K562 (cell line): ENCODE measurements at regions of chrX and their contacts with region 1.

Region 1: DNA sequence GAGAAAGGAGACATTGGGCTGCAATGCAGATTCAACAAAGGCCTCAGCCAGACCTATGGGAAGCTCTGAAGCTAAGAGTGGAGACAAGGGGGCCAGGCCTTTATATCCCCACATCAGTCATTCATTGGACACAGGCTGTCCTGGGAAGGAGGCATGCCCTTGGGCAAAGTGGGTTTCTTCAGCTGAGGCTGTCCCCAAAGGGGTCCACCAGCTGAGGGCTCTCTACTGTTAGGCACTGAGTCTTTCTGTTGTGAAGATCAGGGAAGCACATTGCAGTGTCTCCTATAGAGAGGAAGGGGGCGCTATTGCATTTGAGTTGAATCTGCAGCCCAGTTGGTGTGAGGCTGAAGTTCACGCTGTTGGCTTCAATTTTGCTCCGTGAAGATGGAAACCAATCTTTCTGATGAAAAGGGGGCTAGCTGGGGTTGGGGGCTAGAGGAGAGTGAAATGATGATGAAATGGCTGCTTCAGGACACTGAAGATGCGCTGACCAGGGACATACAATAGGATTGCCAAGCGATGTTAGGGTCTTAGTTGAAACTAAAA is 48.0 kb downstream of the SLC25A5 start:
- DNase-seq: peak; percentile 71 to 76 (median 74)
- ATAC-seq: peak; percentile 91
- H3K4me3 ChIP-seq: no peak overlapping the region
- H3K27ac ChIP-seq: no peak overlapping the region
- H3K4me1 ChIP-seq: no peaks in the 10 kb centered on the region; a peak in 2 of 5 replicates
- H3K27me3 ChIP-seq: no peaks in the 10 kb centered on the region; a peak in 1 of 5 replicates
- CTCF ChIP-seq: peak; percentile 87 to 94 (median 92)
- EP300 ChIP-seq: no peak
- POLR2A ChIP-seq: no peak
- RAD21 ChIP-seq: peak; percentile 79 to 94

Region 2: GRCh38 chrX:119211649-119212014 is 304.6 kb before region 1 on chrX:
- CTCF ChIA-PET with region 1: no interaction called
- POLR2A ChIA-PET with region 1: no interaction called
- in situ Hi-C with region 1: no loop called
- intact Hi-C with region 1: no loop called
- DNase-seq: no peak
- ATAC-seq: no peak
- H3K4me3 ChIP-seq: no peak overlapping the region
- H3K27ac ChIP-seq: no peak overlapping the region
- H3K4me1 ChIP-seq: 0 out of 5 replicates have a peak, but pooled peaks cover 0 to under 1% of the 10 kb centered on the region in 2 experiments
- H3K27me3 ChIP-seq: peaks cover 2 to 7% of the 10 kb centered on the region in 2 experiments; a peak in 2 of 5 replicates
- CTCF ChIP-seq: no peak
- EP300 ChIP-seq: no peak
- POLR2A ChIP-seq: no peak
- RAD21 ChIP-seq: no peak

Region 3: GRCh38 chrX:119359618-119360382 is 156.4 kb before region 1 on chrX:
- CTCF ChIA-PET with region 1: no interaction called
- POLR2A ChIA-PET with region 1: no interaction called
- in situ Hi-C with region 1: no loop called
- intact Hi-C with region 1: no loop called
- DNase-seq: no peak
- ATAC-seq: no peak
- H3K4me3 ChIP-seq: no peak overlapping the region
- H3K27ac ChIP-seq: no peak overlapping the region
- H3K4me1 ChIP-seq: no peaks in the 10 kb centered on the region
- H3K27me3 ChIP-seq: peaks cover 0 to 12% of the 10 kb centered on the region in 2 experiments; a peak in 3 of 5 replicates
- CTCF ChIP-seq: no peak
- EP300 ChIP-seq: no peak
- POLR2A ChIP-seq: no peak
- RAD21 ChIP-seq: no peak

Region 4: GRCh38 chrX:119417844-119418243 is 98.4 kb before region 1 on chrX:
- CTCF ChIA-PET with region 1: interaction called, 5 read pairs
- POLR2A ChIA-PET with region 1: no interaction called
- in situ Hi-C with region 1: no loop called
- intact Hi-C with region 1: loop called (anchors 1 kb)
- DNase-seq: peak in 2 of 4 experiments; percentile 25 to 26
- ATAC-seq: peak; percentile 81
- H3K4me3 ChIP-seq: no peak overlapping the region
- H3K27ac ChIP-seq: no peak overlapping the region
- H3K4me1 ChIP-seq: no peaks in the 10 kb centered on the region
- H3K27me3 ChIP-seq: no peaks in the 10 kb centered on the region
- CTCF ChIP-seq: peak; percentile 18 to 65 (median 50); a peak in 5 of 6 replicates
- EP300 ChIP-seq: no peak
- POLR2A ChIP-seq: no peak
- RAD21 ChIP-seq: peak; percentile 32 to 61; a peak in 2 of 4 replicates

Region 5: GRCh38 chrX:119429471-119429870 is 86.8 kb before region 1 on chrX:
- CTCF ChIA-PET with region 1: no interaction called
- POLR2A ChIA-PET with region 1: no interaction called
- in situ Hi-C with region 1: no loop called
- intact Hi-C with region 1: no loop called
- DNase-seq: no peak
- ATAC-seq: no peak
- H3K4me3 ChIP-seq: no peak overlapping the region
- H3K27ac ChIP-seq: no peak overlapping the region
- H3K4me1 ChIP-seq: peaks cover 9 to 12% of the 10 kb centered on the region in 2 experiments; a peak in 4 of 5 replicates
- H3K27me3 ChIP-seq: no peaks in the 10 kb centered on the region
- CTCF ChIP-seq: no peak
- EP300 ChIP-seq: no peak
- POLR2A ChIP-seq: no peak
- RAD21 ChIP-seq: no peak

Region 6: DNA sequence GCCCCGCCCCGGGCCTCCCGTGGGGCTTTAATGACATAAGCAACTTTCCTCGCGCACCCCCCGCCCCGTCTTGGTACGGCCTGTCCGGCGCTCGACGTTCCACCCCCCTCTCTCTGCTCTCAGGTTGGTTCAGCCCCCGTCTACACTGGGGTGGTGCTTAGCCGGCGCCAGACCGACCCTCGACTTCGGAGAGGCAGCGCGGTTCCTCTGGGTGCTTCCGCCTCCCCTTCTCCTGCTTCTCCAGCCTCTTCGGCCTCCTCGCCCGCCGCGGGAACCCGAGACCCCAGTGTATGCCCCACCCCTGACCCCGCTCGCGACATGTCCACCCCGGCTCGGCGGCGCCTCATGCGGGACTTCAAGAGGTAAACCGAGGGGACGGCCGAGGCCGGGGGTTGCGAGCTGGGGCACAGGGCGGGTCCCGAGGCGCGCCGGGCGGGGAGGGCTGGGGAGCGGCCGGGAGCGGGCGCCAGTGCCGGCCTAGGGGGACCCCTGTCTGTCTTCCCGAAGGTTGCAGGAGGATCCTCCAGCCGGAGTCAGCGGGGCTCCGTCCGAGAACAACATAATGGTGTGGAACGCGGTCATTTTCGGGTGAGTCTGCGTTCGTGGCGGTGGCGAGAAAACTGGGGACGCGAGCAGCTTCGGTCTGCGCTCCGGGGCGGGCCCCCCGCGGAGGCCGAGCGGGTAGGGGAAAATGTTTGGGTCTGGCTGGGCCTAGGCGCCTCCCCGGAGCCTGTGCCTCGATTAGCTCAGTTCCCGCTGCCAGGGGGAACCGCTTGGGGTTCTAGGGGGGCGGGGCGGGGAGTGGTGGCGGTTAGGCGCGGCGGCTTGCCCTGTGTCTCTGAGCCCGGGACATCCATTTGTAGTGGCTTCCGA is 58.4 kb after region 1 on chrX and contains the start of gene UBE2A:
- CTCF ChIA-PET with region 1: interaction called, 6 read pairs
- POLR2A ChIA-PET with region 1: interaction called, 4 read pairs
- in situ Hi-C with region 1: no loop called
- intact Hi-C with region 1: loop called (anchors 1 kb)
- DNase-seq: peak; percentile 87 to 95 (median 92)
- ATAC-seq: peak; percentile 93
- H3K4me3 ChIP-seq: peak within 1 kb of the TSS; percentile 88
- H3K27ac ChIP-seq: peak within 1 kb of the TSS; percentile 88
- H3K4me1 ChIP-seq: peaks cover 8 to 10% of the 10 kb centered on the region in 2 experiments; a peak in 3 of 5 replicates
- H3K27me3 ChIP-seq: no peaks in the 10 kb centered on the region
- CTCF ChIP-seq: peak; percentile 49 to 65 (median 56); a peak in 5 of 6 replicates
- EP300 ChIP-seq: peak; percentile 8; the same call in 1 of the 2 replicates
- POLR2A ChIP-seq: peak; percentile 97
- RAD21 ChIP-seq: peak; percentile 48 to 53
- polyA plus RNA-seq, gene UBE2A: 23.8 to 34.0 TPM

Region 7: GRCh38 chrX:119753571-119754257 is 237.5 kb after region 1 on chrX:
- CTCF ChIA-PET with region 1: no interaction called
- POLR2A ChIA-PET with region 1: no interaction called
- in situ Hi-C with region 1: no loop called
- intact Hi-C with region 1: loop called (anchors 1 kb)
- DNase-seq: peak; percentile 20 to 46 (median 36)
- ATAC-seq: peak; percentile 56
- H3K4me3 ChIP-seq: no peak overlapping the region
- H3K27ac ChIP-seq: no peak overlapping the region
- H3K4me1 ChIP-seq: peaks cover 0 to 12% of the 10 kb centered on the region in 2 experiments; a peak in 2 of 5 replicates
- H3K27me3 ChIP-seq: no peaks in the 10 kb centered on the region
- CTCF ChIP-seq: peak; percentile 54 to 65 (median 61)
- EP300 ChIP-seq: no peak
- POLR2A ChIP-seq: no peak
- RAD21 ChIP-seq: peak; percentile 12 to 55; a peak in 2 of 4 replicates

Region 8: GRCh38 chrX:119871599-119872395 is 355.6 kb after region 1 on chrX and contains the starts of genes NDUFA1 and RNF113A:
- CTCF ChIA-PET with region 1: no interaction called
- POLR2A ChIA-PET with region 1: no interaction called
- in situ Hi-C with region 1: loop called (anchors 10 kb)
- intact Hi-C with region 1: no loop called
- DNase-seq: peak; percentile 77 to 94 (median 82)
- ATAC-seq: peak; percentile 94
- H3K4me3 ChIP-seq: peak within 1 kb of the TSS; percentile 94
- H3K27ac ChIP-seq: peak within 1 kb of the TSS; percentile 99
- H3K4me1 ChIP-seq: peaks cover 0 to 6% of the 10 kb centered on the region in 2 experiments; a peak in 2 of 5 replicates
- H3K27me3 ChIP-seq: no peaks in the 10 kb centered on the region
- CTCF ChIP-seq: no peak
- EP300 ChIP-seq: 0 out of 2 replicates have a peak, but pooled peaks have one; percentile 7
- POLR2A ChIP-seq: peak; percentile 91
- RAD21 ChIP-seq: no peak
- polyA plus RNA-seq, gene NDUFA1: 1,140 to 1,285 TPM
- polyA plus RNA-seq, gene RNF113A: 23.9 to 29.4 TPM